ENCODE measurements at regions of chr9 and their contacts with region 1.

Region 1: GRCh38 chr9:74887041-74887980 is at the start of gene TRPM6:
- DNase-seq: no peak
- H3K4me3 ChIP-seq: peak within 1 kb of the TSS; percentile 57 to 77 (median 64)
- H3K27ac ChIP-seq: peak within 1 kb of the TSS; percentile 66 to 75 (median 70)
- H3K4me1 ChIP-seq: peaks cover 7 to 18% (median 16%) of the 10 kb centered on the region in 4 donors
- H3K27me3 ChIP-seq: peaks cover 0 to 16% (median 0%) of the 10 kb centered on the region in 4 donors
- CTCF ChIP-seq: no peak
- EP300 ChIP-seq: no peak
- POLR2A ChIP-seq: no peak
- total RNA-seq, gene TRPM6: 0.52 to 1.8 (median 1.2) TPM

Region 2: GRCh38 chr9:74804018-74804385 is 83.3 kb before region 1 on chr9:
- intact Hi-C with region 1: no loop called
- DNase-seq: no peak
- H3K4me3 ChIP-seq: no peak overlapping the region
- H3K27ac ChIP-seq: no peak overlapping the region
- H3K4me1 ChIP-seq: no peaks in the 10 kb centered on the region
- H3K27me3 ChIP-seq: no peaks in the 10 kb centered on the region
- CTCF ChIP-seq: no peak
- EP300 ChIP-seq: no peak
- POLR2A ChIP-seq: no peak

Region 3: GRCh38 chr9:74985041-74985440 is 97.7 kb after region 1 on chr9:
- intact Hi-C with region 1: loop called (anchors 10 kb)
- DNase-seq: no peak
- H3K4me3 ChIP-seq: no peak overlapping the region
- H3K27ac ChIP-seq: no peak overlapping the region
- H3K4me1 ChIP-seq: no peaks in the 10 kb centered on the region
- H3K27me3 ChIP-seq: no peaks in the 10 kb centered on the region
- CTCF ChIP-seq: no peak
- EP300 ChIP-seq: no peak
- POLR2A ChIP-seq: no peak

Measured in esophagus muscularis mucosa (tissue), 4 donors.